ENCODE measurements at regions of chr3 and their contacts with region 1.

Region 1: DNA sequence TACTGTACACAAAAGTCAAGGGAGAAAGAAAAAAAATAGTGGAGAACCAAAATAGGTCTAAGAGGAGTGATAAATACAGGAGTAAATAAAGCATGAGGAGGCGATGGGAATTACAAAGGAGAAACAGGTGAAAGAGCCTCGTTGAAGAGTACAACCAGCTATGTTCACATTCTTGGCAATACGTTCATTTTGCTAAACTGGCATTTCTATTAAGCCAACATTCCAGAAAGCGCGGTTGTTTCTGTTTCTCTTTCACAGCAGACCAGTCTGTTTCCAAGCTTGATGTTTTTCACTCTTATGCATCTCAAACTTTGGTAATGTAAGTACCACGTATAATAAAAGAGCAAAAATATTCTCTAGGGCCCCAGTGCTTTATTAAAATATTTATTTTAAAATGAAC is 74.5 kb downstream of the NSUN3 start:
- H3K4me3 ChIP-seq: no peak overlapping the region
- H3K27ac ChIP-seq: no peak overlapping the region
- H3K4me1 ChIP-seq: peaks cover 3% of the 10 kb centered on the region; the same call in 1 of the 2 replicates
- CTCF ChIP-seq: no peak

Region 2: GRCh38 chr3:94118390-94118789 is 19.0 kb before region 1 on chr3:
- CTCF ChIA-PET with region 1: no interaction called
- POLR2A ChIA-PET with region 1: interaction called, 10 read pairs
- H3K4me3 ChIP-seq: no peak overlapping the region
- H3K27ac ChIP-seq: no peak overlapping the region
- H3K4me1 ChIP-seq: peaks cover 4% of the 10 kb centered on the region; the same call in 1 of the 2 replicates
- CTCF ChIP-seq: no peak